Activated B cell treated with CpG ODN at 0.5 μM for 24 hours (primary cell): ENCODE measurements at regions of chr15 and their contacts with region 1.

Region 1: DNA sequence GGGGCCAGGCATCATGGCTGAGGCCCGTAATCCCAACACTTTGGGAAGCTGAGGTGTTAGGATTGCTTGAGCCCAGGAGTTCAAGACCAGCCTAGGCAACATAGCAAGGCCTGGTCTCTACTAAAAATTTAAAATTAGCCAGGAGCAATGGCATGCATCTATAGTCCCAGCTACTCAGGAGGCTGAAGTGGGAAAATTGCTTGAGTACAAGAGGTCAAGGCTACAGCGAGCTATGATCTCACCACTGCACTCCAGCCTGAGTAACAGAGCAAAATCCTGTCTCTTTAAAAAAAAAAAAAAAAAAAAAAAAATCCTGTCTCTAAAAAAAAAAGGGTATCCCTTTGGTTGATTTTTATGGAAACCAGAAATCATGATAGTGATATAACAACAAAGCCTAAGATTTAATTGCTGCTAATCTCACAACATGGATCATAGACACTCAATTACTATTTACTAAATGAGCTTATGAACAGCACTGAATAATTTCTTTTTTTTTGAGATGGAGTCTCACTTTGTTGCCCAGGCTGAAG is 12.1 kb downstream of the PCLAF start:
- DNase-seq: no peak
- ATAC-seq: no peak
- H3K4me3 Mint-ChIP-seq: no peak overlapping the region
- H3K27ac Mint-ChIP-seq: no peak overlapping the region
- H3K4me1 Mint-ChIP-seq: peaks cover 9% of the 10 kb centered on the region
- H3K27me3 Mint-ChIP-seq: no peaks in the 10 kb centered on the region
- CTCF ChIP-seq: no peak

Region 2: GRCh38 chr15:64387562-64388168 is 18.5 kb after region 1 on chr15 and contains the start of gene TRIP4:
- CTCF ChIA-PET with region 1: interaction called, 3 read pairs
- POLR2A ChIA-PET with region 1: interaction called, 10 read pairs
- intact Hi-C with region 1: no loop called
- DNase-seq: peak; percentile 92
- ATAC-seq: peak; percentile 100
- H3K4me3 Mint-ChIP-seq: peak within 1 kb of the TSS; percentile 98
- H3K27ac Mint-ChIP-seq: peak within 1 kb of the TSS; percentile 94
- H3K4me1 Mint-ChIP-seq: peaks cover 25% of the 10 kb centered on the region
- H3K27me3 Mint-ChIP-seq: no peaks in the 10 kb centered on the region
- CTCF ChIP-seq: no peak
- total RNA-seq, gene TRIP4: 26.3 and 35.0 TPM in 2 replicates

Region 3: GRCh38 chr15:65285291-65286068 is 916.3 kb after region 1 on chr15:
- CTCF ChIA-PET with region 1: no interaction called
- POLR2A ChIA-PET with region 1: no interaction called
- intact Hi-C with region 1: no loop called
- DNase-seq: no peak
- ATAC-seq: no peak
- H3K4me3 Mint-ChIP-seq: peak overlapping the region; percentile 85
- H3K27ac Mint-ChIP-seq: peak overlapping the region; percentile 85
- H3K4me1 Mint-ChIP-seq: peaks cover 27% of the 10 kb centered on the region
- H3K27me3 Mint-ChIP-seq: no peaks in the 10 kb centered on the region
- CTCF ChIP-seq: no peak